ENCODE measurements at regions of chr19 and their contacts with region 1.

Region 1: GRCh38 chr19:19224852-19225494 is 13.2 kb downstream of the NCAN start:
- DNase-seq: peak; percentile 63 to 79 (median 75)
- ATAC-seq: peak; percentile 94
- H3K4me3 ChIP-seq: peak overlapping the region; percentile 47
- H3K4me3 Mint-ChIP-seq: peak overlapping the region; percentile 45 to 85 (median 76)
- H3K27ac ChIP-seq: no peak overlapping the region
- H3K27ac Mint-ChIP-seq: peak overlapping the region in 1 of 9 donors; percentile 13
- H3K4me1 ChIP-seq: peaks cover 0 to 9% of the 10 kb centered on the region in 2 donors
- H3K4me1 Mint-ChIP-seq: peaks cover 0 to 4% (median 2%) of the 10 kb centered on the region in 7 donors
- H3K27me3 ChIP-seq: no peaks in the 10 kb centered on the region
- H3K27me3 Mint-ChIP-seq: peaks cover 0 to 20% (median 7%) of the 10 kb centered on the region in 5 donors

Region 2: DNA sequence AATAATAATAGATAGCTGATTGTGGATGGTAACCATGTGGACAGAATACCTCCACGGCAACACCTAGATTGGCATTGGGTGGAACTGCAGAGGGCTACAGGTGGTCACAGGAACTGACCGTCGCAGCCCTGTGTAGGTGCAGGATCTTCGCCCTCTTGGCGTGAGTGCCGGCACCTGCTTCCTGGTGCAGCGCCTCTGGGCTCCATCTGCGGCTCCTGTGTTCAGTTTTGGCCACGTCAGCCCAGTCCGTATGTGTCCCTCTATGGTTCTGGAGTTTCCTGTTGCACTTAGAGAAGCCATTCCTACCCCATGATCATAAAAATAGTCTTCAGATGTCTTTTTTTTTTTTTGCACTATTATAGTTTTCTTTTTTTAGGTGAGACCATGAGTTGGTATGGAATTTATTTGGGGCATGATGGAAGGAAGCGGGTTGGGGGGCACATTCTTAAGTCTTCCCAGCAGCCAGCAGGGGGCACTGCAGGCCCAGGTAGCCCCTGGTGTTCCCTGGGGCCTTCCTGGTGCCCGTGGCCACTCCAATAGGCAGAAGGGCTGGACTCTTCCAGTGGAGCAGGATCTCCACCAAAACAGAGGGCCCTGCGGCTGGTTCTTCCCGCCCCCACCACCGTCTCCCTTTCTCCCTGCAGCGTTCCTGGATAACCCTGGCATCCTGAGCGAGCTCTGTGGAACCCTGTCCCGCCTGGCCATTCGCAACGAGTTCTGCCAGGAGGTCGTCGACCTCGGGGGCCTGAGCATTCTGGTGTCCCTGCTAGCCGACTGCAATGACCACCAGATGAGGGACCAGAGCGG is 171.3 kb before region 1 on chr19:
- CTCF ChIA-PET with region 1: no interaction called
- POLR2A ChIA-PET with region 1: no interaction called
- intact Hi-C with region 1: loop called in 1 of 2 experiments (anchors 2 kb)
- DNase-seq: peak; percentile 28 to 70 (median 55)
- ATAC-seq: peak; percentile 72
- H3K4me3 ChIP-seq: no peak overlapping the region
- H3K4me3 Mint-ChIP-seq: no peak overlapping the region
- H3K27ac ChIP-seq: no peak overlapping the region
- H3K27ac Mint-ChIP-seq: no peak overlapping the region
- H3K4me1 ChIP-seq: no peaks in the 10 kb centered on the region
- H3K4me1 Mint-ChIP-seq: no peaks in the 10 kb centered on the region
- H3K27me3 ChIP-seq: no peaks in the 10 kb centered on the region
- H3K27me3 Mint-ChIP-seq: no peaks in the 10 kb centered on the region

Region 3: DNA sequence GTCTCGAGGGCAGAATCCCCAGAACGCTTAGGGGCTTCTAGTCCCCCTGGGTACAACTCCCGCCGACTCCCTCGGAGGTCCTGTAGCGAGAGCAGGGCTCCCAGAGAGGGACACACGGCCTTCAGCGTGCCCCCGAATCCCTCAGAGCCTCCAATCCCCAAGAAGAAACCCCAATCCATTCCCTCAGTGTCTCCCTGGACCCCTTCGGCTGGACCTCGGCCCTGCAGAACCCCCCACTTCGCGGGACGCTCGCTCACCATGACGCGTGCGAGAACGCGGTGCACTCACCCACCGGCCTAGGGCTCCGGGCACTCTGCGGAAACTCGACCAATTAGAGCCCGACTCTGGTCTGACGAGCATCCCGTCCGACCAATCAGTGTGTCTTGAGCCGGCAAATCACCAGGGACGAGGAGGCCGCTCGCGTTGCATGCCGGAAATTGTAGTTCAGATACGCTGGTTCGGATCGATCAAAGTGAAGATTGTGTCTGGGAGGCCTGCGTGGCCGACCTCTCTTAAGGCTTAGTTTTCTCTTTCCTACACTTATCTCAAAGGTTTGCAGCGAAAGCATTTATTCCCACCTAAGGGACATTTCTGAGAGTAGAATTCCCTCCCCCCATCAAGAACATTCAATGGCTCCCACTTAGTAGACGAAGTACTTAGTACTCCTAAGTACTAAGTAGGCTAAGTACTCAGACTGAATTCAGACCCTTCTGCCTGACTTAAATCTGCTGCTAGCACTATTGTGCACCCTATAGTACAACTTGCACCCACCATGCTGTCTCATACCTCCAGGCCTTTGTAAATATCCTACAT is 86.6 kb before region 1 on chr19 and contains the start of gene TMEM161A:
- CTCF ChIA-PET with region 1: no interaction called
- POLR2A ChIA-PET with region 1: no interaction called
- intact Hi-C with region 1: loop called in 1 of 2 experiments (anchors 2 kb)
- DNase-seq: peak; percentile 84 to 96 (median 93)
- ATAC-seq: peak; percentile 100
- H3K4me3 ChIP-seq: peak within 1 kb of the TSS; percentile 84
- H3K4me3 Mint-ChIP-seq: peak within 1 kb of the TSS; percentile 83 to 100 (median 98)
- H3K27ac ChIP-seq: peak within 1 kb of the TSS; percentile 90
- H3K27ac Mint-ChIP-seq: peak within 1 kb of the TSS; percentile 84 to 97 (median 94)
- H3K4me1 ChIP-seq: peaks cover 8 to 9% of the 10 kb centered on the region in 2 donors
- H3K4me1 Mint-ChIP-seq: peaks cover 20 to 41% (median 29%) of the 10 kb centered on the region in 7 donors
- H3K27me3 ChIP-seq: no peaks in the 10 kb centered on the region
- H3K27me3 Mint-ChIP-seq: no peaks in the 10 kb centered on the region
- total RNA-seq, gene TMEM161A: 15.8 to 32.7 (median 23.5) TPM

Region 4: DNA sequence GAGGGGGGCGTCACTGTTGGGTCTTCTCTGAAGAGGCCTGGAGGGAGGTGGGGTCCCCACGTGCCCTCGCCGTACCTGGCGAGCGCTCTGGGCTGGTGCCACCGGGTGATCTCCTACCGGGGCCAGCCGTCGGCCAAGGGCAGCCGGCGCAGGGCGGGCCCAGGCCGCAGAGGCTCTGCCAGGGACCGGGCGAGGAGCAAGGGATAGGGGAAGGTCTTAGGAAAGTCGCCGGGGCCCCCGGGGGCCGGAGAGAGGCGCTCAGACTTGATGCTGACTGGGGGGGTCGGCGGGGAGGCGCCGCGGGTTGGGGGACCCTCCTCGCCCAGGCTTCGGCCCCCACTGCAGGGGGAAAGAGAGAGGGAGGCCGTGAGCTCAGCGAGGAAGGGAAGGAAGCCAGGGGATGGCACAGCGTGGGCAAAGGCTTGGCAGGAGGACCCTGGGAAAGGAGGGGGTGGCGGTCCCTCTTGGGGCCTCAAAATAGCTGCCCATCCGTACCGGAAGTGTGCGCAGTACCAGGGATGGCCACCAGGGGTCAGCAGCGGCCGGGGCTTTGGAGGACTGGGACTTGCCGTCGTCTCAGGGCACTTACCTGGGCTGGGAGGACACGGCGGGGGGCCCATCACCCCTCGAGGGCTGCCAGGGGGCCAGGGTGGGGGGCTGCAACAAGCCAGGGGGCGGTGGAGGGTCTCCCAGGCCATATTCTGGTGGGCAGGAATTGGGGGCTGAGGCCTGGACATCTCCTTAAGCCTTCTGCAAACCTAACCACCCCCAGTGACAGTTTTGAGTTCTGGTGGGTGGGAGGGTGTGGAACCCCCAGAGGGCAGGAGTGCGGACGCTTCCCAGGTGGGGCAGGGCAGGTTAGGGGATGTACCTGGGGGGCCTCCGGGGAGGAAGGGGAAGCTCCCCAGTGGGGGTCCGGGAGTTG is 79.0 kb before region 1 on chr19:
- CTCF ChIA-PET with region 1: interaction called, 7 read pairs
- POLR2A ChIA-PET with region 1: no interaction called
- intact Hi-C with region 1: loop called (anchors 1 kb)
- DNase-seq: peak; percentile 68 to 93 (median 80)
- ATAC-seq: peak; percentile 96
- H3K4me3 ChIP-seq: no peak overlapping the region
- H3K4me3 Mint-ChIP-seq: no peak overlapping the region
- H3K27ac ChIP-seq: no peak overlapping the region
- H3K27ac Mint-ChIP-seq: no peak overlapping the region
- H3K4me1 ChIP-seq: no peaks in the 10 kb centered on the region
- H3K4me1 Mint-ChIP-seq: no peaks in the 10 kb centered on the region
- H3K27me3 ChIP-seq: no peaks in the 10 kb centered on the region
- H3K27me3 Mint-ChIP-seq: no peaks in the 10 kb centered on the region

Region 5: DNA sequence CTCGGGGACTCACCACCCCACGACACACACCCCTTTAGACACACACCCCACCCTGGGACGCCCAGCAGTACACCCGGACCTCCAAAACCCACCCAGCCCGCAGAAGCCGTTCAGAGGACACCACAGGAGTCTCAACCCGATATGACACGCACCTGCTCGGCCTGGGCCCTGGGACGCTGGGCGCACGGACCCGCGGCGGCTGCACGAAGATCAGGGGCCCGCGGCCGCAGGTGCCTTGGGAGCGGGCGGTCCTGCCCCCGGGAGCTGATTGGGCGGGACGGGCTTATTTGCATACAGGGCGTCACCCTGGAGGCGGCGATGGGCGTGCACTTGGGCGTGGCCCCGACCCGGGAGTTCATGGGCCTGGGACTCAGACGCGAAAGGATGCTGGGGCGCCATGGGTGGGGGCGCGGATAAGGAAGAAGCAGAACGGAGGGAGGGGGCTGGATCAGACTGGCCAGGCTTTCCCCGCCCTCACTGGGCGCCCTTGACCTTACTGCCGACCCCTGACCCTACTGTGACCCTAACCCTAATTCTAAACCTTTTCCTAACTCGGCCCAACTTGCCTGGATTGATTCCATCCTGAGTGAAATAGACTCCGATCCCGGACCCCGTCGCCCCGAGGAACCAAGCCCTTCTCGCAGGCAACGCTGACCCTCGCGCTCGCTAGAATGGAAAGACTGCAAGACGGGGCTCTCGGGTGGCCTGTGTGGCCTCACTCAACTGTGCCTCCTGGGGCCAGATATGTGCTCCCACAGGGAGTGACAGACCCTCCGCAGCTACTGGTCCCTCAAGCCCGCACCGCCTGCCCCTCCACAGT is 54.7 kb before region 1 on chr19 and contains the start of gene MEF2B:
- CTCF ChIA-PET with region 1: interaction called, 7 read pairs
- POLR2A ChIA-PET with region 1: interaction called, 3 read pairs
- intact Hi-C with region 1: loop called in 1 of 2 experiments (anchors 2 kb)
- DNase-seq: peak; percentile 45 to 84 (median 77)
- ATAC-seq: peak; percentile 98
- H3K4me3 ChIP-seq: peak within 1 kb of the TSS; percentile 32
- H3K4me3 Mint-ChIP-seq: peak within 1 kb of the TSS; percentile 2 to 84 (median 71)
- H3K27ac ChIP-seq: no peak within 1 kb of the TSS
- H3K27ac Mint-ChIP-seq: peak within 1 kb of the TSS in 8 of 9 donors; percentile 25 to 70 (median 51)
- H3K4me1 ChIP-seq: peaks cover 0 to 10% of the 10 kb centered on the region in 2 donors
- H3K4me1 Mint-ChIP-seq: peaks cover 14 to 20% (median 17%) of the 10 kb centered on the region in 7 donors
- H3K27me3 ChIP-seq: no peaks in the 10 kb centered on the region
- H3K27me3 Mint-ChIP-seq: peaks cover 0 to 5% (median 0%) of the 10 kb centered on the region in 5 donors
- total RNA-seq, gene MEF2B: 3.0 to 6.4 (median 4.9) TPM

Region 6: GRCh38 chr19:19185853-19186740 is 38.9 kb before region 1 on chr19:
- CTCF ChIA-PET with region 1: interaction called, 7 read pairs
- POLR2A ChIA-PET with region 1: no interaction called
- intact Hi-C with region 1: loop called (anchors 1 kb)
- DNase-seq: peak; percentile 29 to 70 (median 58)
- ATAC-seq: peak; percentile 86
- H3K4me3 ChIP-seq: no peak overlapping the region
- H3K4me3 Mint-ChIP-seq: no peak overlapping the region
- H3K27ac ChIP-seq: no peak overlapping the region
- H3K27ac Mint-ChIP-seq: peak overlapping the region in 6 of 9 donors; percentile 22 to 74 (median 62)
- H3K4me1 ChIP-seq: peaks cover 12 to 20% of the 10 kb centered on the region in 2 donors
- H3K4me1 Mint-ChIP-seq: peaks cover 20 to 43% (median 30%) of the 10 kb centered on the region in 7 donors
- H3K27me3 ChIP-seq: no peaks in the 10 kb centered on the region
- H3K27me3 Mint-ChIP-seq: no peaks in the 10 kb centered on the region